OCI-LY7 (cell line): ENCODE measurements at regions of chr6 and their contacts with region 1.

Region 1: GRCh38 chr6:31729515-31729978 is 448 bp upstream of the DDAH2 start:
- DNase-seq: peak; percentile 85
- H3K4me3 ChIP-seq: peak overlapping the region; percentile 66
- H3K27ac ChIP-seq: peak overlapping the region; percentile 2
- H3K4me1 ChIP-seq: peaks cover 54% of the 10 kb centered on the region
- CTCF ChIP-seq: 0 out of 2 replicates have a peak, but pooled peaks have one; percentile 25

Region 2: DNA sequence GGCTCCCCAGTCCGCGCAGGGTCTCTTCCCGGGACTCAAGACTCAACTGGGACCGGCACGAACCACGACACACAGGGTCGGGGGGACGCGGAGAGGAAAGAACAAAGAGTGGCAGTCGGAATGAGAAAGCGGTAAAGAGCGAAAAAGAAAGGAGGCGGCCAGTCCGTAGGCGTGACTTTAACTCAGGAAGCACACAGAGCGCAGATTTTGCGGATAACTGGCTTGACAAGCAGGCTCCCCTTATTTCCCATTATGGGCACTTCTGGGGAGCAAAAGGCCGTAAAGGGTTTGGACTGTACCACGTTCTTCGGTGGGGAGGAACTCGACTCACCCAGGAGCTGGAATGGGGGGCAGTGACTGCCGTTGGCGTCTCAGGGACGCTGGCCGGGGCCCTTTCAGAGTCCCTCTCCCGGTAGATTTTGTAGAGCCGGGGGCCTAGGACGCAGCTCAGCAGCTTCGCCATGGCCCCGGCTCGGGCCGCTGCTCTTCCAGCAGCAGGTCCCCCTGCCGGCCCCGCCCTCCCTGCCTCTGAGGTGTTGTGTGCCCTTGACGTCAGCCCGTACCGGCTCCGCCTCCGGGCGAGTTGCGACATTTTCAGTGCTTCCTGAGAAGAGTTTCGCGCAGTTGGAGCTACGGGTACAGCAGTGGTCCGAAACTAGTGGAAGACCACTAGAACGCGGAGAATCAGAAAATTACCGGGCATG is 26.6 kb before region 1 on chr6 and contains the start of gene ABHD16A:
- CTCF ChIA-PET with region 1: no interaction called
- POLR2A ChIA-PET with region 1: interaction called, 4 read pairs
- intact Hi-C with region 1: loop called (anchors 2 kb)
- DNase-seq: peak; percentile 99
- H3K4me3 ChIP-seq: peak within 1 kb of the TSS; percentile 78
- H3K27ac ChIP-seq: peak within 1 kb of the TSS; percentile 74
- H3K4me1 ChIP-seq: peaks cover 20% of the 10 kb centered on the region
- CTCF ChIP-seq: no peak
- total RNA-seq, gene ABHD16A: 28.6 and 34.8 TPM in 2 replicates

Region 3: DNA sequence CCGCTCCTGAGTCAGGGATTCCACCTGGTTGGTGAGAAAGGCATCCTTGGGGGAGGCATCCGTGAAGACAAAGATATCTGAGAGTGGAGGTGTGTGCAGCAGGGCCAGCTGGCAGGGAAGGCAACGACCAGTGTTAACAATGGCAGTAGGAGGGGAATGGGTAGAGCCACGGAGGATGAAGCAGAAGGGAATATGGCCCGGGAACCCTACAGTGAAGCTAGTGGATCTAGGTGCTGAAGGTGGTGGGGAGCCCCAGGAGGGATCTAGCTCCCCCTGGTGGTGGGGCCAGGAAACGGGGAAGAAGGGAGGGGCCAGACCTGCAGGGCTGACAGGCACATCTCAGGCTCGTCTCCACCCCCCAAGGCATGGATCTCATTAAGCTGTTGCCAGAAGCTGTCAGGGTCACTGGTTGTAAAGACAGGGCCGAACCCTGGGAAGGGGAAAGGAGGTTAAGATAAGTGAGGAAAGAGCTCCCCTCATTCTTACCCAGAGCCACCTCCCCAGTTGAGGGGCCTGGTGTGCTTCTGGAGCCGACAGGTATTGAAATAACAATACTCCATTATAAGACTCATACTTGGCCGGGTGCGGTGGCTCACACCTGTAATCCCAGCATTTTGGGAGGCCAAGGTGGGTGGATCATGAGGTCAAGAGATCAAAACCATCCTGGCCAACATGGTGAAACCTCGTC is 40.3 kb after region 1 on chr6:
- CTCF ChIA-PET with region 1: no interaction called
- POLR2A ChIA-PET with region 1: no interaction called
- intact Hi-C with region 1: loop called (anchors 1 kb)
- DNase-seq: peak; percentile 75
- H3K4me3 ChIP-seq: no peak overlapping the region
- H3K27ac ChIP-seq: no peak overlapping the region
- H3K4me1 ChIP-seq: no peaks in the 10 kb centered on the region
- CTCF ChIP-seq: peak; percentile 93